Activated naive CD4-positive, alpha-beta T cell treated with anti-CD3 and anti-CD28 coated beads for 36 hours (primary cell): ENCODE measurements at regions of chr17 and their contacts with region 1.

Region 1: GRCh38 chr17:60641810-60642220 is 35.8 kb upstream of the BCAS3 start:
- DNase-seq: peak; percentile 74
- H3K4me3 Mint-ChIP-seq: no peak overlapping the region
- H3K27ac Mint-ChIP-seq: no peak overlapping the region
- H3K4me1 Mint-ChIP-seq: peaks cover 13% of the 10 kb centered on the region
- H3K27me3 Mint-ChIP-seq: no peaks in the 10 kb centered on the region

Region 2: DNA sequence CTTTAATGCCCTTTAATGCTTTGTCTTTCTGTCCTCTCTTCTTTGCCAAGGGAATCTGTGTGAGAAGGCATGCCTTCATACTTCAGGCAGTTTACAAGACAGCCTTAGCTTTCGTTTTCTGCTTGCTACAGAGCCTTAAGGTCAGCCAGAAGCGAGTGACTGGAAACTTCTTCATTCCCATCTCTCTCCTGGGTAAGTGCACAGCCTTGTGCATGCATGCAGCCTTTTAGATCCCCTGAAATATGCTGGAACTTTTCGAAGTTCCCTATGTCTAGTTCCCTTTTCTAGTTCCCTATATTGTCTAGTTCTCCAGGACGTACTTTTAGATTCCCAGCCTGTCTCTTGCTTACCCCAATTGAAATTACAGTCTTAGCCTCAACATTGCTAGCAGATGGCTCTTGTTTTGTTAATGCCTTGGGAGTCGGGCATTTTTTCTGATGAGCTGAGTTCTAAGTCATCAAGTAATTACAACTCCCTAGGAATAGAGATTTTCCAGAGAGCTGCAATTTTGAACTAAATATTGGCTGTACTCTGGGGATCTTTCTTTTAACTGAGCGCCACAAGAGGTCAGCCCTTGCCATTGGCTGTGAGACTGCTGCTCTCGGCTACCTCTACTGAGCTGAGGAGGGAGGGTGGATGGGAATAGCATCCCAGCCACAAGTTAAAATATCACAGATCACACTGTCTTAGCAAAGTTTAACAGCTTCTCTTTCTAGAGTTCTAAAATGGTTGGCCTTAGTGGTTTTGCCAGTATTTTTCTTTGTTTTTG is 64.5 kb before region 1 on chr17:
- CTCF ChIA-PET with region 1: interaction called, 22 read pairs
- intact Hi-C with region 1: loop called (anchors 1 kb)
- DNase-seq: peak; percentile 38
- H3K4me3 Mint-ChIP-seq: peak overlapping the region; percentile 69
- H3K27ac Mint-ChIP-seq: no peak overlapping the region
- H3K4me1 Mint-ChIP-seq: peaks cover 7% of the 10 kb centered on the region
- H3K27me3 Mint-ChIP-seq: no peaks in the 10 kb centered on the region

Region 3: DNA sequence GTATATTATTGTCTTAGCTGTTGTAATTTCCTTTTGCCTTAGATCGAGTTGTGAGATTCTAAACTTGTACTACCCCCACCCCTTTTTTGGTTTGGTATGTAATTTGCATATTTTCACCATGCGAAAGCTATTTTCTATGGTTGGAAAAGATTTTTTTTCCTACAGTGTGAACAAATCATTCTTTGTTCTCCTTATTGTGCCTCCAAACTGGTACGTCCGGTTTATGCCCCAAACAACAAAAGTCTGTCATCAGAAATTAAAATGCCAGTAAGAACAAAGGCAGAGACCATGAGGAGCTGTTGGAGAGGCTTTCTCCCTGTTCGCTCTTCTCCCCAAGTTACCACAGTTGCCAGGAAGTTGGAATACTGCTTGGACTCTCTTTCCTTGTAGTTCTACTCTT is 102.0 kb after region 1 on chr17:
- CTCF ChIA-PET with region 1: no interaction called
- intact Hi-C with region 1: no loop called
- DNase-seq: no peak
- H3K4me3 Mint-ChIP-seq: no peak overlapping the region
- H3K27ac Mint-ChIP-seq: no peak overlapping the region
- H3K4me1 Mint-ChIP-seq: no peaks in the 10 kb centered on the region
- H3K27me3 Mint-ChIP-seq: no peaks in the 10 kb centered on the region